ENCODE measurements at regions of chr10 and their contacts with region 1.

Region 1: DNA sequence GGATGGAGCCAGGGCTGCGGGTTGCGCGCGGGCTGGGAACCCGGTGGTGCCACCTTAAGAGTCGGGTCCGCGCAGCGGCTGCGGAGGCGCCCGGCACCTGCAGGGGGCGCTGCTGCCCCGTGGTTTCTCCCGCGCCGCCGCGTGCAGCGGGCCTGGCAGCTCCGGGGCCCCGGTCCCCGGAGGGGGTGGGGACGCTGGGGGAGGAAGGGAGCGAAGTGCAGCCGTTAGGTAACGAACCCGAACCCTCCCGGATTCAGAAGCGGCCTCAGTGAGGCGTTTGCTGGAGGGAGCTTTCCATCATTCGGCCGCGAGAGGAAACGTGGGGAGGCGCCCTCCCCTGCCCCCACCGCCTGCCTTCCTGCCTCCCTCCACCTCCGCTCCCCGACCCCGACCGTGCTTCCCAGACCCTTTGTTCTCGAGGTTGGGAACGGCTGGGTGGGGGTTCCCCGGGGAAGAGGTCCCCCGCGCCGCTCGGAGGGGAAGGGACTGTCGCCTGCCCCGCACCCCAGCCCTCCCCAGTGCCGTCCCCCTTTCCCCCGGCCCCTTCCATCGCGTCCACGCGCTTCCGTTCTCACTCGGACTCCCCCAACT is 29.6 kb downstream of the SKIDA1 start:
- DNase-seq: peak; percentile 85
- H3K4me3 Mint-ChIP-seq: peak overlapping the region; percentile 77
- H3K27ac Mint-ChIP-seq: no peak overlapping the region
- H3K4me1 Mint-ChIP-seq: peaks cover 14% of the 10 kb centered on the region
- H3K27me3 Mint-ChIP-seq: peaks cover 54% of the 10 kb centered on the region

Region 2: DNA sequence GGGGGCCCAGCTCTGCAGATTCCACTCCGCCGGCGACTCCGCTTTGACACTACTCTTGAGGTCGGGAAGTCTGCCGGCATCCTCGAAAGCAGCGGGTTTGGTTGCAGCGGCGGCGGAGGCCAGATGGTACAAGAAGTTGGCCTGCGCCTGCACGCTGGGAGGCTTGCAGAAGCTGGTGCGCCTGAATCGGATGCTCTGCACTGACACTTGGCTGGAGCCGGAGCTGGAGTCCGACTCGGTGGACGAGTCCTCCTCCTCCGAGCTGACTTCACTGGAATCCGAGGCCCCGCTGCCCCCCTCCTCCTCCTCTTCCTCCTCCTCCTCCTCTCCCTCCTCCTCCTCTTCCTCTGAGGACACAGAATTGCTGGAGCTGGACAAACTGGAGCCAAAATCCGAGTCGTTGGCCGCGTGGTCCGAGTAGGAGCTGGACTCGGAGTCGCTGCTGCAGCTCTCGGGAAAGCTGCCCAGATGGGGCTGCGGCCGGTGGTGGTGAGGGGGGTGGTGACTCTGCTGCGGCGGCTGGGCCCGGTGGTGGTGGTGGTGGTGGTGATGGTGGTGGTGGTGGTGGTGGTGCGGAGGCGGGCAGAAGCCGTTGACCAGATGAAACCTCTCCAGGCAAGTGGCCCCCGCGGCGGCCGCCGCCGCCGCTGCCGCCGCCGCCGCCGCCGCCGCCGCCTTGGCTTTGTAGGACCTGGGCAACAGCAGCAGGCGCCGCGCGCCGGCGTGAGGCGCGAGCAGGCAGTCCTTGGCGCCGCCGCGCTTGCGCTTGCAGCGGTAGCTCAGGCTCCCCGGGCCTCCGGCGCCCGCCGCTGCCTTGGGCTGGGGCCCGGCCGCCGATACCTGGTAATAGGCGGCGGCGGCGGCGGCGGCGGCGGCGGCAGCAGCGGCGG is 20.6 kb after region 1 on chr10:
- CTCF ChIA-PET with region 1: interaction called, 21 read pairs
- intact Hi-C with region 1: loop called (anchors 1 kb)
- DNase-seq: peak; percentile 58
- H3K4me3 Mint-ChIP-seq: peak overlapping the region; percentile 70
- H3K27ac Mint-ChIP-seq: no peak overlapping the region
- H3K4me1 Mint-ChIP-seq: peaks cover 36% of the 10 kb centered on the region
- H3K27me3 Mint-ChIP-seq: peaks cover 76% of the 10 kb centered on the region

Region 3: DNA sequence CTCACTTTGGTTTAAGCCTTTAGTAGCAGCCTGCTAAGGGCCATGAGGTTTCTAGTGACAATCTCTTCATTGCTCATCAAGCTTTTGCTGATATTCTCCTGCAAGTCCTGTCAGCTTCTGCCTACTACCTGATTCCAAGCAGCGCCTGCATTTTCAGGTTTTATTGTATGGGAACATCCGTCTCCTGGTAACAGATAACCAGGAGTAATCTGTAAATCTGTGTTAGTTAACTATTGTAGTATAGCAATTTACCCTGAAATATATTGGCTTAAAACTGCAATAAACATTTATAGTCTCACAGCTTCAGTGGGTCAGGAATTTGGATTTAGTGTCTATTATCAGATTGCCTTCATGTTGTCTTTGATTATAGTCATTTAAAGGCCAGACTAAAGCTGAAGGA is 132.2 kb after region 1 on chr10:
- CTCF ChIA-PET with region 1: no interaction called
- intact Hi-C with region 1: no loop called
- DNase-seq: no peak
- H3K4me3 Mint-ChIP-seq: no peak overlapping the region
- H3K27ac Mint-ChIP-seq: no peak overlapping the region
- H3K4me1 Mint-ChIP-seq: peaks cover 30% of the 10 kb centered on the region
- H3K27me3 Mint-ChIP-seq: no peaks in the 10 kb centered on the region

Region 4: GRCh38 chr10:21732067-21732772 is 236.4 kb after region 1 on chr10:
- CTCF ChIA-PET with region 1: interaction called, 41 read pairs
- intact Hi-C with region 1: loop called (anchors 1 kb)
- DNase-seq: peak; percentile 61
- H3K4me3 Mint-ChIP-seq: no peak overlapping the region
- H3K27ac Mint-ChIP-seq: no peak overlapping the region
- H3K4me1 Mint-ChIP-seq: peaks cover 25% of the 10 kb centered on the region
- H3K27me3 Mint-ChIP-seq: no peaks in the 10 kb centered on the region

Region 5: GRCh38 chr10:21885940-21886339 is 390.1 kb after region 1 on chr10:
- CTCF ChIA-PET with region 1: no interaction called
- intact Hi-C with region 1: no loop called
- DNase-seq: no peak
- H3K4me3 Mint-ChIP-seq: no peak overlapping the region
- H3K27ac Mint-ChIP-seq: no peak overlapping the region
- H3K4me1 Mint-ChIP-seq: peaks cover 20% of the 10 kb centered on the region
- H3K27me3 Mint-ChIP-seq: no peaks in the 10 kb centered on the region

Region 6: DNA sequence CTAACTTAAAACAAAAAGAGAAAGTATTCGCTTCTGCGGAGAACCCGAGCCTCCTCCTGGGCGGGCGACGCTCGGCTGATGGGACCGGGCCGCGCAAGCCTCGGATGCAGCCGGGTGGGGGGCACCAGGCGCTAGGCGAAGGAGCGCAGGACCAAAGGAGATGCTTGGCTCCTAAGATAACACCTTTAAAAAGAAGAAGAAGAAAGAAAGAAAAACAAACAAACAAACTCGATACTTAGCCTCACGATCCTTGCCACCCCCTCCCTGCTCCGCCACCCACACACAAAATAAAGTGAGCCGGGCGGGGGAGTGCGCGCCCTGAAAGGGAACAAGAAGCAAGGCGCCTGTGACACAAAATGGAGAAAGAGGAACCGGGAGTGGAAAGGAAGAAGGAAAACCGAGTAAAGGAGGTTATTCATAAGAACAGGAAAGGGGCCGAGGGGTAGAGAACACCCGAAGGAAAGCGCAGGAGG is 755.9 kb after region 1 on chr10:
- CTCF ChIA-PET with region 1: no interaction called
- intact Hi-C with region 1: loop called (anchors 10 kb)
- DNase-seq: peak; percentile 74
- H3K4me3 Mint-ChIP-seq: peak overlapping the region; percentile 99
- H3K27ac Mint-ChIP-seq: peak overlapping the region; percentile 99
- H3K4me1 Mint-ChIP-seq: peaks cover 34% of the 10 kb centered on the region
- H3K27me3 Mint-ChIP-seq: peaks cover 5% of the 10 kb centered on the region

Region 7: DNA sequence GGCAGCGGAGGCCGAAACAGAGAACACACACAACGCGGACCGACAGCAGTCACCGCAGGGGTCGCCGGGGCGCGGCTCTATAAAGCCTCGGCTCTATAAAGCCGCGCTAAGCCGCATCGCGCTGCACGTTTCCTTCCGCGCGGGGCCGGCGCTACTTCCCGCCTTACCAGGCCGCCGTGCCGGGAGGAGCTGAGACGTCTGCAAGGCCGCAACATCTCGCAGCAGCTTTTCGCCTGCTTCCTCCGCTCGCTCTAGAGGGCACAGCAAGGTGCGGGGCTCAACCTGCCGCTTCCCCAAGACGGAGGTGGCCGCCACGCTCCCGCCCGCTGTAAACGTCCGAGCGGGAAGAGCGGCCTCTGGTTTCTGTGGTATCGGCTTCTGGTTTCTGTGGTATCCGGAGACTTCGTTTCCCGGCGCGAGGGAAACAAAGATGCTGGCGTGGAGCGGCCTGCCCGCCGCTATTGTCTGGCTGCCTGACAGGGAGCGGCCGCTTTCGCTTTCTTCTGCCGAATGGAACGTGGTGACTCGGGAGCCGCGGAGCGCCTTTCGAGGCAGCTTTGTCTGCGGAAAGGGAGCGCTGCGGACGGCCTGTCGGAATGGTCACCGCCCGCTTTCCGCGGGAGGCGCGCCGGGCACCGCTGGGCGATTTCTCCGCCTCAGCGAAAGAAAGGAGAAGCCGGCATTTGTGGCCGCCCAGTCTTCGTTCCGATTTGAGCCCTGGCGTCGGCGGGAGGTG is 941.2 kb after region 1 on chr10:
- CTCF ChIA-PET with region 1: no interaction called
- intact Hi-C with region 1: loop called (anchors 5 kb)
- DNase-seq: peak; percentile 84
- H3K4me3 Mint-ChIP-seq: peak overlapping the region; percentile 84
- H3K27ac Mint-ChIP-seq: peak overlapping the region; percentile 92
- H3K4me1 Mint-ChIP-seq: peaks cover 31% of the 10 kb centered on the region
- H3K27me3 Mint-ChIP-seq: no peaks in the 10 kb centered on the region

Measured in activated naive CD4-positive, alpha-beta T cell treated with anti-CD3 and anti-CD28 coated beads for 36 hours (primary cell).